ENCODE measurements at regions of chr11 and their contacts with region 1.

Region 1: DNA sequence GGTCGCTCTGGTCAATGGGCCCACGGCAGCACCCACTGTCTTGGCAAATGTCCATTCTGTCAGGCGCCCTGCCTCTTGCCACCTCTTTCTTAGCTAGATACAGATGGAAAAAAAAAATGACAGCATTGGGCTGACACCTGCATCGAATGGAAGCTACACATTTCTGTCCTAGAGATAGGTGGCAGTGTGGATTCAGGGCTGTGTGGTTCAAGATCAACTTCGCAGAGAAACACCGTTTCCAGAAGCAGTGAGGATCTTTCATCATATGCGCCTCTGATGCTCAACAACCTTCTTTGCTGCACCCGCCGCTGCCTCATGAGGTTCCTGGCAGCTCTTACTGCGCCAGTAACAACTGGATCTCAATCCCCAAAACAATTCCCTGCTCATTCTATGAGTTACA is 236.3 kb downstream of the KIRREL3 start:
- DNase-seq: no peak
- ATAC-seq: no peak
- H3K4me3 ChIP-seq: no peak overlapping the region
- H3K27ac ChIP-seq: no peak overlapping the region
- H3K4me1 ChIP-seq: no peaks in the 10 kb centered on the region
- H3K27me3 ChIP-seq: no peaks in the 10 kb centered on the region
- CTCF ChIP-seq: no peak

Region 2: GRCh38 chr11:126700773-126701519 is 63.3 kb before region 1 on chr11:
- intact Hi-C with region 1: loop called in 1 of 2 experiments (anchors 10 kb)
- DNase-seq: no peak
- ATAC-seq: no peak
- H3K4me3 ChIP-seq: no peak overlapping the region
- H3K27ac ChIP-seq: no peak overlapping the region
- H3K4me1 ChIP-seq: no peaks in the 10 kb centered on the region
- H3K27me3 ChIP-seq: no peaks in the 10 kb centered on the region
- CTCF ChIP-seq: no peak

Measured in psoas muscle (tissue), 8 donors.